Naive thymus-derived CD4-positive, alpha-beta T cell (primary cell): ENCODE measurements at regions of chr1 and their contacts with region 1.

Region 1: GRCh38 chr1:4825800-4826450 is 171.5 kb downstream of the AJAP1 start:
- DNase-seq: no peak
- ATAC-seq: no peak
- H3K4me3 ChIP-seq: no peak overlapping the region
- H3K4me3 Mint-ChIP-seq: no peak overlapping the region
- H3K27ac ChIP-seq: no peak overlapping the region
- H3K27ac Mint-ChIP-seq: no peak overlapping the region
- H3K4me1 ChIP-seq: no peaks in the 10 kb centered on the region
- H3K4me1 Mint-ChIP-seq: peaks cover 0 to 1% (median 0%) of the 10 kb centered on the region in 7 donors
- H3K27me3 ChIP-seq: no peaks in the 10 kb centered on the region
- H3K27me3 Mint-ChIP-seq: peaks cover 0 to 16% (median 11%) of the 10 kb centered on the region in 5 donors

Region 2: GRCh38 chr1:3910857-3911845 is 914.8 kb before region 1 on chr1:
- CTCF ChIA-PET with region 1: interaction called, 3 read pairs
- POLR2A ChIA-PET with region 1: no interaction called
- intact Hi-C with region 1: loop called in 1 of 2 experiments (anchors 10 kb)
- DNase-seq: peak; percentile 56 to 81 (median 73)
- ATAC-seq: peak; percentile 88
- H3K4me3 ChIP-seq: no peak overlapping the region
- H3K4me3 Mint-ChIP-seq: peak overlapping the region in 6 of 10 donors; percentile 29 to 70 (median 59)
- H3K27ac ChIP-seq: no peak overlapping the region
- H3K27ac Mint-ChIP-seq: no peak overlapping the region
- H3K4me1 ChIP-seq: no peaks in the 10 kb centered on the region
- H3K4me1 Mint-ChIP-seq: peaks cover 0 to 8% (median 3%) of the 10 kb centered on the region in 7 donors
- H3K27me3 ChIP-seq: no peaks in the 10 kb centered on the region
- H3K27me3 Mint-ChIP-seq: peaks cover 0 to 5% (median 0%) of the 10 kb centered on the region in 5 donors

Region 3: DNA sequence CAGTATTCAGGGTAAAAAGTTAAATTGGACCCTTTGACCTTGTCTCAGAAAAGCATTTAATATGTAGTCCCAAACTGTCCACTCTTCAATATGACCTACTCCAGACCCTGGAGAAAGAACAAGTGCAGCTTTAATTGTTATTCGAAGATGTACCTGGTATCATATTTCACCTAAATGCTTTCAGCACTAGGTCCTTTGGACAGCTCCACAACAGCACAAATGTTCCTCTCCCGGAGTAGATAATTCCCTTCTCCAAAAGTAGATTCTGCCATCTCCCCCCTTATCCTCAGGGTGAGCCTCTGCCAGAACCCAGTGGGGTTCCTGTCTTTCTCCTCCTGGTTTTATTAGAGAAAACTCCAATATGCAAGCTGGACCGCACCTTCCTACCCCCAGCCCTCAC is 276.0 kb before region 1 on chr1:
- CTCF ChIA-PET with region 1: no interaction called
- POLR2A ChIA-PET with region 1: no interaction called
- intact Hi-C with region 1: no loop called
- DNase-seq: no peak
- ATAC-seq: no peak
- H3K4me3 ChIP-seq: no peak overlapping the region
- H3K4me3 Mint-ChIP-seq: no peak overlapping the region
- H3K27ac ChIP-seq: no peak overlapping the region
- H3K27ac Mint-ChIP-seq: no peak overlapping the region
- H3K4me1 ChIP-seq: no peaks in the 10 kb centered on the region
- H3K4me1 Mint-ChIP-seq: peaks cover 0 to under 1% (median 0%) of the 10 kb centered on the region in 7 donors
- H3K27me3 ChIP-seq: no peaks in the 10 kb centered on the region
- H3K27me3 Mint-ChIP-seq: peaks cover 0 to 33% (median 18%) of the 10 kb centered on the region in 5 donors

Region 4: DNA sequence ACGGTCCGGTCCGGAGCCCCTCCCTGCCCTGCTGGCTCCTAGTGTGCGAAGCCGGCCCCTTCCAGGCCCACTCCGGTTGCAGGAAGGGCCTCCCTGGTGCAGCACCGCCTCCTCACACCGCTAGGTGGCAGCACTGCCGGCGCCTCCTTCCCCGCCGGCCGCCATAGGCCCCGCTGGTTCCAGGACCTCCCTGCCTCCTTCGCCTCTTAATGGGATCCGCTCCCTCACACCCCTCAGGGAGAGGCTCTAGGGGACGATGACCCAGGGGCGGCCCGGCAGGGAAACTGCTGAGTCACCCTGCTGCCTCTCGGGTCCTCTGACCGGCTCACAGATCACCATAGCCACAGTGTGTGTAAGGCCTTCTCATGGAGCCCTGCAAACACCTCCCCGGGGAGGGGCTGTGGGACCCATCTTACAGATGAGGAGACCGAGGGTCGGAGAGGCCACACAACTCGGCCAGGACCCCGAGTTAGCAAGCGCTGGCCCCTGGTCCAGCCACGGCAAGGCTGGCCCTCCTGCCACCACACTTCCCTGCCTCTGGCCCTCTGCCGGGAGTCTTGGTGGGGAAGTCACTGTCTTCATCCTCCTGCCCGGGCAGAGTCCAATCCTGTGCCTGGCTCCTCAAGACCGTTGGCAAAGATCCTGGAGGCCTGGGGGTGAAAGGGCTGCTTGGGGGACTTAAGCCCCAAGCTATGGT is 173.1 kb before region 1 on chr1:
- CTCF ChIA-PET with region 1: no interaction called
- POLR2A ChIA-PET with region 1: no interaction called
- intact Hi-C with region 1: loop called in 1 of 2 experiments (anchors 1 kb)
- DNase-seq: peak in 8 of 9 donors; percentile 5 to 70 (median 50)
- ATAC-seq: peak; percentile 80
- H3K4me3 ChIP-seq: no peak overlapping the region
- H3K4me3 Mint-ChIP-seq: peak overlapping the region in 4 of 10 donors; percentile 16 to 71 (median 34)
- H3K27ac ChIP-seq: no peak overlapping the region
- H3K27ac Mint-ChIP-seq: no peak overlapping the region
- H3K4me1 ChIP-seq: peaks cover 0 to 6% of the 10 kb centered on the region in 2 donors
- H3K4me1 Mint-ChIP-seq: peaks cover 0 to 11% (median 9%) of the 10 kb centered on the region in 7 donors
- H3K27me3 ChIP-seq: no peaks in the 10 kb centered on the region
- H3K27me3 Mint-ChIP-seq: peaks cover 11 to 34% (median 19%) of the 10 kb centered on the region in 5 donors

Region 5: GRCh38 chr1:4756851-4757580 is 68.9 kb before region 1 on chr1:
- CTCF ChIA-PET with region 1: no interaction called
- POLR2A ChIA-PET with region 1: no interaction called
- intact Hi-C with region 1: no loop called
- DNase-seq: no peak
- ATAC-seq: no peak
- H3K4me3 ChIP-seq: no peak overlapping the region
- H3K4me3 Mint-ChIP-seq: no peak overlapping the region
- H3K27ac ChIP-seq: no peak overlapping the region
- H3K27ac Mint-ChIP-seq: no peak overlapping the region
- H3K4me1 ChIP-seq: no peaks in the 10 kb centered on the region
- H3K4me1 Mint-ChIP-seq: no peaks in the 10 kb centered on the region
- H3K27me3 ChIP-seq: no peaks in the 10 kb centered on the region
- H3K27me3 Mint-ChIP-seq: peaks cover 0 to 24% (median 6%) of the 10 kb centered on the region in 5 donors

Region 6: DNA sequence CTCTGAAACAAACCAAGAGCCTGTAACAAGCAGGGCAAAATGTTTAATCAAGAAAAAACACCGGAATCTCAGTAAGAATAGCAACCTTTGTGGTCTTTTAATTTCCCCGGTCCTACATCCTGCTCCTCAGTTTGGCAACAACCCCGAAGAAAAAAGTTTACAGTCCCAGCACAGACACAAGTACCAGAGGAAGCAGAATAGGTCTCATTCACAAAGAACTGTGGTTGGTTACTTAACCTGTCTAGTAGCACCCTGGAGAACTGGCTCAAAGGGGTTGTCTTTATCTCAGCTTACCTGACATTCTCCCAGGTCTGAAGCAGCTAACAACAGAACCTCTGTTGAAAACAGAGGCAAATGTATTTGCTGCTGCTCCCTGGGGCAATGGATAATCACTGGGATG is 227.8 kb after region 1 on chr1:
- CTCF ChIA-PET with region 1: no interaction called
- POLR2A ChIA-PET with region 1: no interaction called
- intact Hi-C with region 1: no loop called
- DNase-seq: peak in 5 of 9 donors; percentile 0 to 24 (median 4)
- ATAC-seq: no peak
- H3K4me3 ChIP-seq: no peak overlapping the region
- H3K4me3 Mint-ChIP-seq: no peak overlapping the region
- H3K27ac ChIP-seq: no peak overlapping the region
- H3K27ac Mint-ChIP-seq: no peak overlapping the region
- H3K4me1 ChIP-seq: peaks cover 0 to 6% of the 10 kb centered on the region in 2 donors
- H3K4me1 Mint-ChIP-seq: peaks cover 0 to 5% (median 0%) of the 10 kb centered on the region in 7 donors
- H3K27me3 ChIP-seq: no peaks in the 10 kb centered on the region
- H3K27me3 Mint-ChIP-seq: peaks cover 0 to 42% (median 23%) of the 10 kb centered on the region in 5 donors